Calu3 (cell line): ENCODE measurements at regions of chr3 and their contacts with region 1.

Region 1: DNA sequence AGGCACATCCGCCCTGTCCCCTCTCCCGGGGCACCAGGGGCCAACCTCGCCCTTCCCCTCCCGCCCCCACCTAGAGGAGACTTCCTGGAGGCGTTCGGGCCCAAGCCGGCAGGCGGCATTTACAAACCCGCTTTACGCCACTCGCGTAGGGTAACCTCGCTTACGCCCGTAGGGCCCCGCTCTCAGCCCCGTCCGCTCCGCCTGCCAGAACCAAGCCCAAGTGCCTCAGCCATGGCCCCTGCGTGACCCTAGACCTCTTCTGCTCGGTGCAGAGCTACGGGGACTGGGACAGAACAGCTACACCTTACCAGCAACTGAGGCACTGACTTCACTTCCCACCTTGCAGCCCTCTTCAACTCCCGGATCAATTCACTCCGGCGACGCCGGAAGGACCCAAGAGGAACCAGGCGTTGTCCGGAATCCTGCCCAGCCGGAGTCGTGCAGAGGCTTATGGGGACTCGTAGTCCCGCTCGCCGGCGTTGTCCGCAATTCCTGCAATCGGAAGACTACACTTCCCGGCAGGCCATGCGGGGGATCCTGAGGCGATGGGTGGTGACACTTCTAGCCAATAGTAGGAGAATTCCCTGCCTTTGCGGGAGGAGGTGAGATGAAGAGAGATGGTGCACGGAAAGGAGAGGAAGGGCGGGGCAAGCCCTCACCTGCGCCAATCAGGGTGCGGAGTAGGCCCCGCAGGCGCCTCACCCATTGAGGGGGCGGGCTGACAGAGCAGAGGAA is at the start of gene PDCD10:
- DNase-seq: peak; percentile 99
- H3K4me3 Mint-ChIP-seq: no peak within 1 kb of the TSS
- H3K27ac Mint-ChIP-seq: no peak within 1 kb of the TSS
- H3K4me1 Mint-ChIP-seq: peaks cover 27% of the 10 kb centered on the region
- H3K27me3 Mint-ChIP-seq: no peaks in the 10 kb centered on the region
- CTCF ChIP-seq: no peak
- total RNA-seq, gene PDCD10: 117 and 120 TPM in 2 replicates

Region 2: DNA sequence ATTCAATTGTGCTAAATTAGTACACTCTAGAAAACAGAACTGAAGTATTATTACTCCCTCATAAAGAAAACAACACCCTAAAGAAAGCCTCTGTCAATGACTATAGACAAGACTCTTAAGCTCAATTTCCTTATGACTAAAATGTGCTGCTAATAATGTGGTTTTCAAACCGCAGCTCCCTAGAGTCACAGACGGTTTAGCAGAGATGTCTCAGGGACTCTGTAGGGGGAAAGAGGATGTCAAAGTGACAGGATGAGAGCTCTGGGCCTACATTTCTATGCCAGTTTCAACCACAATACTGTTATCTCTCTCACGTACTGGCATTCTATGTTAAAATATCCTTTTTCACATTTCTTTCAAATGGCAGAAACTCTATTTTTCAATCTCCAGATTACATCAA is 43.3 kb before region 1 on chr3:
- CTCF ChIA-PET with region 1: no interaction called
- intact Hi-C with region 1: loop called (anchors 5 kb)
- DNase-seq: no peak
- H3K4me3 Mint-ChIP-seq: no peak overlapping the region
- H3K27ac Mint-ChIP-seq: no peak overlapping the region
- H3K4me1 Mint-ChIP-seq: peaks cover 10% of the 10 kb centered on the region
- H3K27me3 Mint-ChIP-seq: no peaks in the 10 kb centered on the region
- CTCF ChIP-seq: no peak